Astrocyte of the cerebellum (primary cell): ENCODE measurements at regions of chr5 and their contacts with region 1.

Region 1: GRCh38 chr5:148730943-148731861 is 76.9 kb upstream of the HTR4 start:
- DNase-seq: peak; percentile 87
- H3K4me3 ChIP-seq: no peak overlapping the region
- CTCF ChIP-seq: peak; percentile 70

Region 2: GRCh38 chr5:149114403-149115312 is 383.5 kb after region 1 on chr5:
- in situ Hi-C with region 1: loop called (anchors 25 kb)
- DNase-seq: peak; percentile 73
- H3K4me3 ChIP-seq: no peak overlapping the region
- CTCF ChIP-seq: peak; percentile 86